ENCODE measurements at regions of chr4 and their contacts with region 1.

Region 1: DNA sequence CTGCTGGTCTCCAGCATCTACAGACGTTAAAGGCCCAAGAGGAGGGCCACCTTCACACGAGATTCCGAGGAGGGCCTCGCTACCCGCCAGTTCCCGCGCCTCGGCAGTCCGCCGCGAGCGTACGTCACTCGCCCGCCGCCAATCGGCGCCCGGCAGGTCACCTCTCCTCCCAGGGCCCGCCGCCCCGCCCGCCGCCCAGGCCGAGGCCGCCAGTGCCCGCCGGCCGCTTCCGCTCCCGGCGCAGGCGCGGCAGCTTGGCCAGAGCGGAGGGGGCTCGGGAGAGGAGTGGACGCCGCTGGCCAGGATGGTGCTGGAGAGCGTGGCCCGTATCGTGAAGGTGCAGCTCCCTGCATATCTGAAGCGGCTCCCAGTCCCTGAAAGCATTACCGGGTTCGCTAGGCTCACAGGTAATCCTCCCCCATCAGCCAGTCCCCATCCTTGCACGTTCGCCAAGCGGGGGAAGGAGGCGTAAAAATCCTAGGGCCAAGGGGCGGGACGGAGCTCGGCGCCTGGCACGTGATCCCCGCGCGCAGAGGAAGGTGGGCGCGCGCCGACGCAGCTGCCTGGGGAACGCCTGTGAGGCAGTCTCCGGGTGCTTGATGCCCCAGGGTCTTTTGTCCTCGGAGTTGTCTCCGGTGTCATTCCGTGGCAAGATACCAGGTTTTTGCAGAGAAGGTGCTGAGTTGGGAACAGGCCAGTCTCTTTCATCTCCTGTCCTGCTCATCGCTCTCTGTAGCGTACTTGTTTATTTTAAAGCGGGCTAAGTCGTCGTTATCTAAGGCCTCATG is at the start of gene CISD2:
- DNase-seq: peak; percentile 86 to 97 (median 94)
- ATAC-seq: peak; percentile 83 to 88
- H3K4me3 Mint-ChIP-seq: peak within 1 kb of the TSS; percentile 85 to 99 (median 97)
- H3K27ac Mint-ChIP-seq: peak within 1 kb of the TSS; percentile 95 to 100 (median 99)
- H3K4me1 Mint-ChIP-seq: peaks cover 15 to 74% (median 51%) of the 10 kb centered on the region in 4 donors
- H3K27me3 Mint-ChIP-seq: no peaks in the 10 kb centered on the region
- polyA plus RNA-seq, gene CISD2: 20.2 to 30.5 (median 24.6) TPM

Region 2: DNA sequence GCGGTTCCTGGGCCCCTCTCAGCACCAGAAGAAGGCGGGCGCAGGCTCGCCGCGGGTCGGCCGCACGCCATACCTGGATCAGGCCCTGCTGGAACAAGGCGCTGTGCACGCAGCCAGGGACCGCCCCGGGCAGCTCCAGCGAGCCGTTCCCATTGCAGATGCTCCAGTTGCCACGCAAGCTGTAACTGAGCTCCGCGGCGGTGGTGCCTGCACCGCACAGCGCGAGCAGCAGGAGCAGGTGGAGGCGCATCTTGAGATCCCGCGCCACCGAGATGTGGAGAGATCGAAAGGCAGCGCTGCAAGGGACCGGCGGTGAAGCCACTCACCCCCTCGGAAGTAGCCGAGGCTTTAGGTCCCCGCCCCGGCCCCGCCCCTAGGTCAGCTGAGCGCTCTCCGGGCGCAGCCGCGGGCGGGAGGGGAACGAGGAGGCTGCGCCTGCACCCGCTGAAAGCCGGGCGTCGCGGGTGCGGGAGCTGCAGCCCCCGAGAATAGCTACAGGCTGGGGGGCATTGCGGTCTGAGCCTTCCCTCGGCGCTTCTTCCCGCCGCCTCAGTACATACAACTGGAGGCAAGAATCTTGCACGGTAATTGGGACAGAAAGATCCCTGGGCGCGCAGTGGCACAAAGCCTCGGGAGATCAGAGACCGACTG is 108.2 kb before region 1 on chr4 and contains the start of gene MANBA:
- POLR2A ChIA-PET with region 1: interaction called, 22 read pairs
- DNase-seq: peak; percentile 66 to 91 (median 78)
- ATAC-seq: peak; percentile 82 to 90
- H3K4me3 Mint-ChIP-seq: peak within 1 kb of the TSS; percentile 86 to 100 (median 97)
- H3K27ac Mint-ChIP-seq: peak within 1 kb of the TSS; percentile 90 to 96 (median 94)
- H3K4me1 Mint-ChIP-seq: peaks cover 27 to 49% (median 44%) of the 10 kb centered on the region in 4 donors
- H3K27me3 Mint-ChIP-seq: peaks cover 0 to 3% (median 0%) of the 10 kb centered on the region in 5 donors
- polyA plus RNA-seq, gene MANBA: 16.7 to 17.8 (median 17.1) TPM

Region 3: DNA sequence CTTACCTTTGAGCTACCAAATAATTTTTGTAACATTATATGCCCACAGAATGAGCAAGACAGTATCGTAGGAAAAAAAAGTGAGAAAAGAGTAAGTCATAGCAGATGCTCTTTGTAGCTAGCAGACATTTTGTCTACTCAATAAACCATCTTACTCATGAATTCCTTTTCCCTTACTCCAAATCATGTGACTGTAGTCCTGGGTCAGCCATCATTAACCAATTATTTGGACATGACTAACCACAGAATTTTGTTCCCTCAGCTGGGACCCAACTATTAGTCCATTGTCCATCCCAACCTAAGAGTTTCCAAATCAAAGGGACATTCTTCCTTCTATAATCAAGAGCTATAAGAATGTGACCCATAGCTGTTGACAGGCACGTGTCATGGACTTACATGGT is 53.0 kb before region 1 on chr4:
- POLR2A ChIA-PET with region 1: interaction called, 14 read pairs
- DNase-seq: no peak
- ATAC-seq: no peak
- H3K4me3 Mint-ChIP-seq: peak overlapping the region in 9 of 10 donors; percentile 9 to 81 (median 60)
- H3K27ac Mint-ChIP-seq: peak overlapping the region in 9 of 10 donors; percentile 12 to 84 (median 71)
- H3K4me1 Mint-ChIP-seq: peaks cover 44 to 93% (median 90%) of the 10 kb centered on the region in 4 donors
- H3K27me3 Mint-ChIP-seq: no peaks in the 10 kb centered on the region

Region 4: DNA sequence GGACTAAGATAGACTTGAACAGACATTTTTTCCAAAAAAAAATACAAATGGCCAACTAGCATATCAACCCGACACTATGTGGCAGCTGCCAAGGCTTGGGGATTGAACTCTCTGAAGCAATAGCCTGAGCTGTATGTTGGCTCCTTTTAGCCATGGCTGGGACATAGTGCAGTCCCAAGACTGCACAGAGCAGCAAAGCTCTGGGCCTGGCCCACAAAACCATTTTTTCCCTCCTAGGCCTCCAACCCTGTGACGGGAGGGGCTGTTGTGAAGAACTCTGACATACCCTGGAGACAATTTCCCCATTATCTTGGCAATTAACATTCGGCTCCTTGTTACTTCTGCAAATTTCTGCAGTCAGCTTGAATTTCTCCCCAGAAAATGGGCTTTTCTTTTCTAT is 49.9 kb after region 1 on chr4:
- POLR2A ChIA-PET with region 1: no interaction called
- DNase-seq: no peak
- ATAC-seq: no peak
- H3K4me3 Mint-ChIP-seq: no peak overlapping the region
- H3K27ac Mint-ChIP-seq: no peak overlapping the region
- H3K4me1 Mint-ChIP-seq: peaks cover 0 to 2% (median 0%) of the 10 kb centered on the region in 4 donors
- H3K27me3 Mint-ChIP-seq: no peaks in the 10 kb centered on the region